CD4-positive, alpha-beta T cell (primary cell): ENCODE measurements at regions of chr1 and their contacts with region 1.

Region 1: GRCh38 chr1:89538361-89538760 is 13.7 kb downstream of the LRRC8B start:
- DNase-seq: peak in 1 of 14 experiments; percentile 20
- ATAC-seq: no peak
- H3K4me3 ChIP-seq: no peak overlapping the region
- H3K4me3 Mint-ChIP-seq: no peak overlapping the region
- H3K27ac ChIP-seq: no peak overlapping the region
- H3K27ac Mint-ChIP-seq: no peak overlapping the region
- H3K4me1 ChIP-seq: peaks cover 5% of the 10 kb centered on the region
- H3K4me1 Mint-ChIP-seq: peaks cover 78% of the 10 kb centered on the region
- H3K27me3 ChIP-seq: no peaks in the 10 kb centered on the region
- H3K27me3 Mint-ChIP-seq: no peaks in the 10 kb centered on the region
- CTCF ChIP-seq: no peak

Region 2: DNA sequence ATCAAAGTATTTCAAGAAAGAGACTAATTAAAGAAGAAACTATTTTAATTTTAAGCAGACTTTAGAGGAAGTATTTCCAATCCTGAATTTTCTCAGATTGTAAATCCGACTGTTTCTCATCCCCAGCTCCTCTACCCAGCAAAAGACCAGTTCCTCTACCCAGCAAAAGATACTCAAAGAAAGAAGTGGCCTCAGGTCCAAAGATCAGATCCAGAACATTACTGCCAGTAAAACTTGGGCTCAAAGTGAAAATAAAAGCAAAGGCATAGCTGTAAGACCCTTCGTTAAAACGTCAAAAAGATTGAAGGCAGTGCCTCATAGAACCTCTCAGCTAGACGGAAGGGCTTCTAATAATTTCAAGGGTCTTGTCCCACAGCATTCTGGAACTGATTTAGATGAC is 36.3 kb after region 1 on chr1:
- CTCF ChIA-PET with region 1: no interaction called
- POLR2A ChIA-PET with region 1: no interaction called
- intact Hi-C with region 1: loop called in 1 of 2 experiments (anchors 5 kb)
- DNase-seq: no peak
- ATAC-seq: no peak
- H3K4me3 ChIP-seq: no peak overlapping the region
- H3K4me3 Mint-ChIP-seq: no peak overlapping the region
- H3K27ac ChIP-seq: no peak overlapping the region
- H3K27ac Mint-ChIP-seq: no peak overlapping the region
- H3K4me1 ChIP-seq: no peaks in the 10 kb centered on the region
- H3K4me1 Mint-ChIP-seq: peaks cover 28% of the 10 kb centered on the region
- H3K27me3 ChIP-seq: no peaks in the 10 kb centered on the region
- H3K27me3 Mint-ChIP-seq: no peaks in the 10 kb centered on the region
- CTCF ChIP-seq: no peak